ENCODE measurements at regions of chr2 and their contacts with region 1.

Region 1: DNA sequence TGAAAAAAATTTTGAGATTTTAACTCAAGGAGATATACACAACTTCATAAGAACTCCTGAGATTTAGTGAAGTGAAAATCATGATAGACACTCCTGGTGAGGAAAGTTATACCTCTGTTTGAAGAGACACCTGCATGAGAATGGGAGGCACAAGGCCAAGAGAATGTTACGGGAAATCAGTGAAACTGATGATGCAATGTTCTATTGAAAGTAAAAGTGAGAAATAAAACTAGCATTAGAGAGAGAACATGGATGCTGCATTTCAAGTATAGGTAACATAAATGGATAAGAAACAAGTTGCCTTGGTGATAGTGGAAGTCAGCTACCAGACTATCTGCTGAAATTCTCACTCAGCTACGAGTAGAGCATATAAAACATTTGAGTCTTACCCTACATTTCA is 562.1 kb upstream of the FANCL start:
- DNase-seq: no peak
- ATAC-seq: no peak
- H3K4me3 ChIP-seq: no peak overlapping the region
- H3K27ac ChIP-seq: no peak overlapping the region
- H3K4me1 ChIP-seq: no peaks in the 10 kb centered on the region
- H3K27me3 ChIP-seq: no peaks in the 10 kb centered on the region
- CTCF ChIP-seq: no peak
- POLR2A ChIP-seq: no peak

Region 2: GRCh38 chr2:58860586-58860985 is 57.4 kb after region 1 on chr2:
- in situ Hi-C with region 1: no loop called
- intact Hi-C with region 1: loop called (anchors 2 kb)
- DNase-seq: no peak
- ATAC-seq: no peak
- H3K4me3 ChIP-seq: no peak overlapping the region
- H3K27ac ChIP-seq: no peak overlapping the region
- H3K4me1 ChIP-seq: no peaks in the 10 kb centered on the region
- H3K27me3 ChIP-seq: no peaks in the 10 kb centered on the region
- CTCF ChIP-seq: no peak
- POLR2A ChIP-seq: no peak